WTC11 (cell line): ENCODE measurements at regions of chr17 and their contacts with region 1.

Region 1: DNA sequence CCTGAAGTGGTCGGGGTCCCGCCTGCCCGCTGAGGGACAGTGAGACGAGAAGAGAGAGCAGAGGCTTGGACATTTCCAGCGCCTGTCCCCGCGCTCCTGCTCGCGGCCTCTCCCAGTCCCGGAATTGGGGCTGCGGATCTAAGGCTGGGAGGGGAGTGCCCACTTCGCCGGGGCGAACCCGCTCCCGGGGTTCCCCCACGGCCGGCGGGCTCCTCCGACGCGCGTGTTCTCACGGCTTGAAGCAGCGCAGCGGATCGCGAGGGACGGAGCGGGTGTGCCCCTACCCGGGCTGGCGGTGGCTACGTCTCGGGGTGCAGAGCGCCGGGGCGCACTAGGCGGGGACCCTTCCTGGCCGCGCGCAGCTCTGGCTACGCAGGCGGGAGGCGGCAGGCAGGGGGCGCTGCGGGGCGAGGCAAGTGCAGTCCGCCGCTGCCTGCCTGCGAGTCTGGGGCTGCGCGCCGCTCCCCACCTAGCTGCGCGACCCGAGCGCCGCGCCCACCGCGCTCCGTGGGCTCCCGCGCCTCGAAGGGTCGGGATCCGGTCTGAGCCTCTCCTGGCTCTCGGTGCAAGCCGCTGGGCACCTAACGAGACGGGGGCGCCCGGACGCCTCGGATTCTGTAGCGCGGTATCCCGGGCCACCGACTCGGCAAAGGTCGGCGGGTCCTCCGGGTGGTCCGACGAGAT is 1.2 kb downstream of the NGFR start:
- DNase-seq: peak; percentile 90
- ATAC-seq: peak; percentile 69
- H3K4me3 Mint-ChIP-seq: peak overlapping the region; percentile 85
- H3K27ac Mint-ChIP-seq: no peak overlapping the region
- H3K4me1 Mint-ChIP-seq: peaks cover 31% of the 10 kb centered on the region
- H3K27me3 Mint-ChIP-seq: peaks cover 75% of the 10 kb centered on the region
- CTCF ChIP-seq: peak; percentile 87

Region 2: DNA sequence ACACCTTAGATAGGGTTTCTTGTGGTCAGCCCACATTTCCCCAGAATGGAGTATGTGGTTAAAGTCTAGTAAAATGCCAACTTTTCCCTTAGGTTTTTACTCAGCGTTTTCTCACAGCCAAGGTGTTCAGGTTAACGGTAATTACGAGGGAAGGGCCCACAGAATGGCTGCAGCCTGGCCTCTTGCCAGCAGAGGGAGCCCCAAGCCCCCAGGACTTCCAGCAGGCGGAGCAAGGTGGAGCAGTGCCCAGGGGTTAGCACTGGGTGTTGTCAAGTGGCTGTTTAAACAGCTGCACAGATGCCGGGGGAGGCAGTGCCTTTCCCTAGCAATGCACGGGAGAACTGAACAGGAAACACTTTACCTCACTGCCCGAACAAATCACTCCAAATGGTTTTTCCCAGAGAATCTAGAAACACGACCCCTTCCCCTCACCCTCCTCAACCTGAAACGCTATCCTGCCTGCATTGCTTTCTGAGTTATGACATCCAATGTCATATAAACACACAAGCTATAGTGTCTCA is 88.3 kb before region 1 on chr17:
- CTCF ChIA-PET with region 1: interaction called, 31 read pairs
- POLR2A ChIA-PET with region 1: no interaction called
- DNase-seq: peak; percentile 91
- ATAC-seq: peak; percentile 99
- H3K4me3 Mint-ChIP-seq: no peak overlapping the region
- H3K27ac Mint-ChIP-seq: 0 out of 2 replicates have a peak overlapping the region, but pooled peaks have one; percentile 73
- H3K4me1 Mint-ChIP-seq: no peaks in the 10 kb centered on the region
- H3K27me3 Mint-ChIP-seq: no peaks in the 10 kb centered on the region
- CTCF ChIP-seq: peak; percentile 91

Region 3: GRCh38 chr17:49434821-49435670 is 61.3 kb before region 1 on chr17:
- CTCF ChIA-PET with region 1: interaction called, 61 read pairs
- POLR2A ChIA-PET with region 1: no interaction called
- DNase-seq: peak; percentile 87
- ATAC-seq: peak; percentile 70
- H3K4me3 Mint-ChIP-seq: no peak overlapping the region
- H3K27ac Mint-ChIP-seq: no peak overlapping the region
- H3K4me1 Mint-ChIP-seq: peaks cover 26% of the 10 kb centered on the region
- H3K27me3 Mint-ChIP-seq: peaks cover 21% of the 10 kb centered on the region
- CTCF ChIP-seq: peak; percentile 96

Region 4: GRCh38 chr17:49471089-49471683 is 25.1 kb before region 1 on chr17:
- CTCF ChIA-PET with region 1: interaction called, 30 read pairs
- POLR2A ChIA-PET with region 1: no interaction called
- DNase-seq: no peak
- ATAC-seq: peak; percentile 50
- H3K4me3 Mint-ChIP-seq: peak overlapping the region; percentile 66
- H3K27ac Mint-ChIP-seq: no peak overlapping the region
- H3K4me1 Mint-ChIP-seq: peaks cover 24% of the 10 kb centered on the region
- H3K27me3 Mint-ChIP-seq: peaks cover 60% of the 10 kb centered on the region
- CTCF ChIP-seq: no peak

Region 5: DNA sequence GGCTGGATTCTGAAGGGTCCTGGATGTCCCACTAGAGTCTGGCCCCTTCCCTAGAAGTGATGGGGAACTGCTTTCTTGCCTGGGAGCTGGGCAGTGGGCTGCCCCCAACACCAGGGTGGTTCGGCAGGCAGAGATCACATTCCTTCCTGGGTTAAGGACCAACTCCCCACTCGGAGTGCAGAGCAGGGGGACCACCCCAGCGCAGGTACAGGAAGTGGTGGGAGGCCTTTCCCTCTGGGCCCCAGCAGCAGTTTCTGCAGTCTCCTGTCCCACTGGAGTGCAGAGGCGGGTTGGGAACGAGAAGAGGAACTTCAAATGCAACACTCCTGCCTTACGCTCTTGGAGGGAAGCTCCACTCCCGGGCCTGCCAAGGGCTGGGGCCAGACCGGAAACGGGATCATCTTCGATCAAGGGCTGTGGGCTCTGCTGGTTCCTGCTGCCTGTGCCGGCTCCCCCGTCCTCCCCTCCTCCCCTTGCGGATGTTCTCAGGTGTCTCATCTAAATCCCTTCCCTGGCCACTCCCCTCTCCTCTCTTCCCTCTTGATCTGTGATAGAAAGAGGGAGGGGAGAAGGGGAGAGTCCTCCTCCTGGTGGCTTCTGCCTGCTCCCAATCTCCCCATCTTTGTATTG is 10.2 kb before region 1 on chr17:
- CTCF ChIA-PET with region 1: interaction called, 41 read pairs
- POLR2A ChIA-PET with region 1: no interaction called
- DNase-seq: peak; percentile 87
- ATAC-seq: peak; percentile 96
- H3K4me3 Mint-ChIP-seq: peak overlapping the region; percentile 35
- H3K27ac Mint-ChIP-seq: peak overlapping the region; percentile 89; the same call in 1 of the 2 replicates
- H3K4me1 Mint-ChIP-seq: peaks cover 65% of the 10 kb centered on the region
- H3K27me3 Mint-ChIP-seq: peaks cover 14% of the 10 kb centered on the region
- CTCF ChIP-seq: no peak

Region 6: DNA sequence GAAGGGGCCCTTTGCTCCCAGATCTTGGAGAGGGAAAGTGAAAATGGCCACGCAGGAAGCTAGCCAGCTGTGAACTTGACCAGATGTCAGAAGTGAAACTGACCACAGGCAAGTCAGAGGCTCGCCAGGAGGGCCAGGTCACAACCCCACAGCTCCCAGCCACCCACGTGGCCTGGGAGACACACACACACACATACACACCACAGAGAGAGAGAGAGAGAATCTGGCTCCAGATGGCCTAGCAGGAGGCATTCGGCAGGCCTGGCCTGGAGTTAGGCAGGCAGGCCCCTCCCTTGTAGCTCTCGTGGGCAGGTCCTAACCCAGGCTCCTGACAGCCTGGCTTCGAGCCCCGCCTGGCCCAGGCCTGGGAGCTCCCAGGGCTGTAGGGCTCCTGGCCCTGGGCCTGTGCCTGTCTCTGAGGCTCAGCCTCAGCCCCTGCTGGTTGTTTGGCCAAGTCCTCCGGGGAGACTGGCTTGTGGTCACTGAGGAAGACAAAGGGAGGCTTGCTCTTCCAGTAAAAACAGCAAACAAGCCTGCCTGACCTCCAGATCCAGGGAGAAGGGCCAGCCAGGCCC is 19.0 kb after region 1 on chr17:
- CTCF ChIA-PET with region 1: interaction called, 199 read pairs
- POLR2A ChIA-PET with region 1: interaction called, 5 read pairs
- DNase-seq: peak; percentile 73
- ATAC-seq: peak; percentile 92
- H3K4me3 Mint-ChIP-seq: no peak overlapping the region
- H3K27ac Mint-ChIP-seq: peak overlapping the region; percentile 75
- H3K4me1 Mint-ChIP-seq: peaks cover 53% of the 10 kb centered on the region
- H3K27me3 Mint-ChIP-seq: no peaks in the 10 kb centered on the region; the same call in 1 of the 2 replicates
- CTCF ChIP-seq: no peak